ENCODE measurements at regions of chr4 and their contacts with region 1.

Region 1: GRCh38 chr4:8580321-8581093 is at the start of gene GPR78:
- DNase-seq: peak; percentile 69
- ATAC-seq: peak; percentile 77
- total RNA-seq, gene GPR78: 0.58 TPM

Region 2: GRCh38 chr4:8069102-8069752 is 511.3 kb before region 1 on chr4:
- intact Hi-C with region 1: loop called (anchors 10 kb)
- DNase-seq: no peak
- ATAC-seq: no peak

Region 3: GRCh38 chr4:8544741-8545641 is 35.5 kb before region 1 on chr4:
- intact Hi-C with region 1: loop called (anchors 1 kb)
- DNase-seq: peak; percentile 41
- ATAC-seq: no peak

Region 4: GRCh38 chr4:8744083-8744805 is 163.7 kb after region 1 on chr4:
- intact Hi-C with region 1: no loop called
- DNase-seq: peak; percentile 39
- ATAC-seq: no peak